Natural killer cell (primary cell): ENCODE measurements at regions of chr12 and their contacts with region 1.

Region 1: DNA sequence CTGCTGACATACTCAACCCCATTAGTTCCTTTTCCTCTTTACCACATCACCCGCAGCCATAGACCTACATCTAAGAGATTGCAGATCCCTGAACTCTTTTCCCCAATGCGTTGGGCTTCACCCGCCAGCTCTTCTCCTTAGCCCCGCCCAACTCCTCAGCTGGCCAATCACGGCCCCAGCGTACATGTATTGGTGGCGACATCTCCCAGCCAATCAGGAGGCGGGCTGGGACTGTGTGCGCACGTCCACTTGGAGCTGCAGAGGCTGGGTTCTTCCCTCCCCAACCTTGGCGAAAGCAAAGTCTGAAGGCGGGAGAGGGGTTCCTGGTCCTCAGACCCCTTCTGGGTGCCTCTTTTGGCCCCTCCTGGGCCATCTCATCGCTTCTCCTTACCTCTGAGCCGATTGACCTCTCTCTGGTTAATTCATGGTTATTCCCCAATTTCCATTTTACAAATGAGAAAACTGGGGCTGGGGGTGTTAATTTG is 11.0 kb downstream of the PDE1B start:
- DNase-seq: peak; percentile 82 to 92
- ATAC-seq: peak; percentile 100
- H3K4me3 ChIP-seq: peak overlapping the region; percentile 48
- H3K4me3 Mint-ChIP-seq: peak overlapping the region; percentile 88
- H3K27ac ChIP-seq: peak overlapping the region; percentile 59
- H3K27ac Mint-ChIP-seq: peak overlapping the region; percentile 37 to 86
- H3K4me1 ChIP-seq: peaks cover 17% of the 10 kb centered on the region
- H3K4me1 Mint-ChIP-seq: peaks cover 15 to 29% of the 10 kb centered on the region in 2 donors
- H3K27me3 ChIP-seq: no peaks in the 10 kb centered on the region
- H3K27me3 Mint-ChIP-seq: no peaks in the 10 kb centered on the region
- CTCF ChIP-seq: no peak

Region 2: GRCh38 chr12:54497883-54498282 is 62.5 kb before region 1 on chr12:
- intact Hi-C with region 1: loop called (anchors 1 kb)
- DNase-seq: no peak
- ATAC-seq: peak in 2 of 3 donors; percentile 1 to 6
- H3K4me3 ChIP-seq: peak overlapping the region; percentile 75
- H3K4me3 Mint-ChIP-seq: peak overlapping the region; percentile 99
- H3K27ac ChIP-seq: peak overlapping the region; percentile 74
- H3K27ac Mint-ChIP-seq: peak overlapping the region; percentile 83 to 92
- H3K4me1 ChIP-seq: peaks cover 19% of the 10 kb centered on the region
- H3K4me1 Mint-ChIP-seq: peaks cover 35 to 51% of the 10 kb centered on the region in 2 donors
- H3K27me3 ChIP-seq: no peaks in the 10 kb centered on the region
- H3K27me3 Mint-ChIP-seq: no peaks in the 10 kb centered on the region
- CTCF ChIP-seq: no peak